ENCODE measurements at regions of chr13 and their contacts with region 1.

Region 1: GRCh38 chr13:110216398-110217041 is 90.4 kb downstream of the COL4A1 start:
- DNase-seq: peak in 3 of 5 donors; percentile 37 to 56 (median 51)
- ATAC-seq: peak; percentile 61 to 68 (median 64)
- H3K4me3 ChIP-seq: no peak overlapping the region
- H3K27ac ChIP-seq: peak overlapping the region; percentile 28 to 81 (median 55)
- H3K4me1 ChIP-seq: peaks cover 6 to 72% (median 58%) of the 10 kb centered on the region in 12 donors
- H3K27me3 ChIP-seq: no peaks in the 10 kb centered on the region
- CTCF ChIP-seq: no peak
- POLR2A ChIP-seq: no peak

Region 2: DNA sequence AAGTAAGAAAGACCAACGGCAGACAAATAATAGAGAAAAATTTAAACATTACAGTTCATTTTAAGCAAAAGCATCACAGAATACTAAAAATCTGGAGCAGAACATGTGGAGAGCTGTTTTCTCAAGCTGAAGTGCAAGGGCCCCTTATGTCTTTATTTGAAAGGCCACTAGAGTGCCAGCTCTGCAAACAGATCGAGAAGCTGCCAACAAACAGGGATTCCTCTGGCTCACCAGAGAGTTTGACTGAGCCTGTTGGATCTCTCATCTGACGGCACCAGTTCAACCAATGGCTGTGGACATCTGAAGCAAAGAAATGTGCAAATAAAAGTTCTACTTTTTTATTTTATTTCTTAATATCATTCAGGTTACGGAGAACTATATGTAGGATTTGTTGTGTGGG is 210.2 kb after region 1 on chr13:
- intact Hi-C with region 1: loop called in 4 of 10 experiments (anchors 5 kb)
- DNase-seq: no peak
- ATAC-seq: peak in 3 of 4 donors; percentile 49 to 65 (median 62)
- H3K4me3 ChIP-seq: no peak overlapping the region
- H3K27ac ChIP-seq: peak overlapping the region in 1 of 12 donors; percentile 45
- H3K4me1 ChIP-seq: peaks cover 0 to 43% (median 21%) of the 10 kb centered on the region in 12 donors
- H3K27me3 ChIP-seq: peaks cover 0 to 7% (median 0%) of the 10 kb centered on the region in 9 donors
- CTCF ChIP-seq: no peak
- POLR2A ChIP-seq: no peak

Region 3: GRCh38 chr13:110433014-110433413 is 216.5 kb after region 1 on chr13:
- intact Hi-C with region 1: loop called in 4 of 10 experiments (anchors 5 kb)
- DNase-seq: peak; percentile 59 to 79 (median 70)
- ATAC-seq: peak; percentile 49 to 80 (median 76)
- H3K4me3 ChIP-seq: no peak overlapping the region
- H3K27ac ChIP-seq: peak overlapping the region in 11 of 12 donors; percentile 2 to 69 (median 45)
- H3K4me1 ChIP-seq: peaks cover 5 to 53% (median 28%) of the 10 kb centered on the region in 12 donors
- H3K27me3 ChIP-seq: no peaks in the 10 kb centered on the region
- CTCF ChIP-seq: no peak
- POLR2A ChIP-seq: no peak

Region 4: DNA sequence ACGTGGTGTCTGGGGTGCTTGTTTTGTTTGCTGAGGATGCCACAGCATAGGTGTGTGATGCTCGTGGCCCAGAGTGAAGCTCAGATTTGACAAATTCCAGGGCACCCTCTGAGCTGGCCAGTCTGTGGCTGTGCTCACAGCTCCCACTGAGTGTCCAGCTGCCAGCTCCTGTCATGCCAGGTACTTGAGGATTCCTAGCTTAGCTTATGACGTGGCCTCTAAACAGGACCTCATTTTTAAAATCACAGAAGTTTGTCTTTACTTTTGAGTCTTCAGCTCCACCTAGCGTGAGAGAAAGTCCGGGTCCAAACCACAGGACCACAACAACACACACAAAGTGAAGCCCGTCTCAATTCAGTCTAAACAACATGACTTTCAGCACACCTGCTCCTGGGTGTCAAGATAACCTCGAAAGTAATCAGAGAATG is 227.7 kb after region 1 on chr13:
- intact Hi-C with region 1: loop called in 4 of 10 experiments (anchors 5 to 10 kb)
- DNase-seq: no peak
- ATAC-seq: peak; percentile 27 to 81 (median 66)
- H3K4me3 ChIP-seq: no peak overlapping the region
- H3K27ac ChIP-seq: peak overlapping the region in 2 of 12 donors; percentile 33 to 73
- H3K4me1 ChIP-seq: peaks cover 0 to 11% (median 1%) of the 10 kb centered on the region in 12 donors
- H3K27me3 ChIP-seq: no peaks in the 10 kb centered on the region
- CTCF ChIP-seq: peak in 9 of 12 donors; percentile 8 to 56 (median 39)
- POLR2A ChIP-seq: no peak

Measured in heart left ventricle (tissue), 16 donors.